Activated T-helper 2 cell treated with anti-CD3 and anti-CD28 coated beads, Interferon-gamma antibody, Interleukin-2, Interleukin-4, amounts not matched to agents 10 μg/mL and 5 μg/mL and 100 μg/mL, durations not matched to agents 14 hours and 24 hours and 36 hours (primary cell): ENCODE measurements at regions of chr9 and their contacts with region 1.

Region 1: GRCh38 chr9:34989003-34989945 is at the start of gene DNAJB5:
- DNase-seq: peak; percentile 98
- H3K4me3 Mint-ChIP-seq: peak within 1 kb of the TSS; percentile 92
- H3K27ac Mint-ChIP-seq: peak within 1 kb of the TSS; percentile 87
- H3K4me1 Mint-ChIP-seq: peaks cover 62% of the 10 kb centered on the region
- H3K27me3 Mint-ChIP-seq: no peaks in the 10 kb centered on the region
- total RNA-seq, gene DNAJB5: 7.5 and 11.3 TPM in 2 replicates

Region 2: DNA sequence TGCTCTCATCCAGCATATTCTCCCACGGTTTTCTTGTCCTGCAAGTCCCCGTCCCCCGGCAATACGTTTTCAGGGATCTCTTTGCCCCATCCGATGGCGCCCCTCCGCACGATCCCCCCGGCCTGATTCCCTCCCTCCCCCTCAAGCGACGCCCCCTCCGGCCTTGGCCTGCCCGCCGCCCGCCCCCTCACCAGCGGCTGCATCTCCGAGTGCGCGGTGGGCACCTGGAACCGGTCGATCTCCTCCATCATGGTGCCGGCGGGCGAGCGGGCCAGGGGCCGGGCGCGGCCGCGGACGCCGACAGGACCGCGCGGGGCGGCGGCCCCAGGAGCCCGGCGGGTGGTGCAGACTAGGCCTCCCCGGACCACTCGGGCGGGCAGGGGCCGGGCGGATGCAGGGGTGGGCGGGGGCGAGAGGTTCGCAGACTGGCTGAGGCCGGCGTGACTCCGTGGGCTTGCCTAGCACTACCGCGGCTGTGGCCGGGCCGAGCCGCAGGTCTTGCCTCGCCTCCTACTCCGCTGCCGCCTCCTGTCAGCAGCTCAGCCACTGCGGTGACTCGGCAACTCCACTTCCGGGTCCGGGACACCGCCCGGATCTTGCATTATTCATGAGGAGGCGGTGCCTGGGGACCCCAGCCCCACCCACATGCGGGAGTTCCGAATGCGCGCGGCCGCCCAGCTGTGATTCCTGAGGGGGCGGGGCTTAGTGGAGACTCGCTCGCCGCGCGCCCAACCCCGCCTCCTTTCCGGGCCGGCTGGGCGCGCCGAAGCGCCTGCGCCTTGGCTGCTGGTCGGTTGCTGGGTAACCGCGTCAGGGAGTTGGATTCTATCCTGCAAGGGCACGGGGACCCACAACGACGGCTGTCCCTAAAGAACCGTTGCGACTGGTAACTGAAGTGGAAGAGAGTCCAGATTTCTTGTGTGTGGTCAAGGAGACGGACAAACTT is 531.0 kb before region 1 on chr9 and contains the starts of genes DNAI1 and FAM219A:
- intact Hi-C with region 1: loop called (anchors 5 kb)
- DNase-seq: peak; percentile 99
- H3K4me3 Mint-ChIP-seq: peak within 1 kb of the TSS; percentile 88
- H3K27ac Mint-ChIP-seq: peak within 1 kb of the TSS; percentile 60
- H3K4me1 Mint-ChIP-seq: peaks cover 43% of the 10 kb centered on the region
- H3K27me3 Mint-ChIP-seq: peaks cover 17% of the 10 kb centered on the region
- total RNA-seq, gene DNAI1: not detected in 2 replicates
- total RNA-seq, gene FAM219A: 17.3 and 19.7 TPM in 2 replicates

Region 3: GRCh38 chr9:34899535-34900158 is 89.6 kb before region 1 on chr9:
- intact Hi-C with region 1: loop called (anchors 1 kb)
- DNase-seq: peak; percentile 63
- H3K4me3 Mint-ChIP-seq: no peak overlapping the region
- H3K27ac Mint-ChIP-seq: no peak overlapping the region
- H3K4me1 Mint-ChIP-seq: no peaks in the 10 kb centered on the region
- H3K27me3 Mint-ChIP-seq: peaks cover 37% of the 10 kb centered on the region

Region 4: DNA sequence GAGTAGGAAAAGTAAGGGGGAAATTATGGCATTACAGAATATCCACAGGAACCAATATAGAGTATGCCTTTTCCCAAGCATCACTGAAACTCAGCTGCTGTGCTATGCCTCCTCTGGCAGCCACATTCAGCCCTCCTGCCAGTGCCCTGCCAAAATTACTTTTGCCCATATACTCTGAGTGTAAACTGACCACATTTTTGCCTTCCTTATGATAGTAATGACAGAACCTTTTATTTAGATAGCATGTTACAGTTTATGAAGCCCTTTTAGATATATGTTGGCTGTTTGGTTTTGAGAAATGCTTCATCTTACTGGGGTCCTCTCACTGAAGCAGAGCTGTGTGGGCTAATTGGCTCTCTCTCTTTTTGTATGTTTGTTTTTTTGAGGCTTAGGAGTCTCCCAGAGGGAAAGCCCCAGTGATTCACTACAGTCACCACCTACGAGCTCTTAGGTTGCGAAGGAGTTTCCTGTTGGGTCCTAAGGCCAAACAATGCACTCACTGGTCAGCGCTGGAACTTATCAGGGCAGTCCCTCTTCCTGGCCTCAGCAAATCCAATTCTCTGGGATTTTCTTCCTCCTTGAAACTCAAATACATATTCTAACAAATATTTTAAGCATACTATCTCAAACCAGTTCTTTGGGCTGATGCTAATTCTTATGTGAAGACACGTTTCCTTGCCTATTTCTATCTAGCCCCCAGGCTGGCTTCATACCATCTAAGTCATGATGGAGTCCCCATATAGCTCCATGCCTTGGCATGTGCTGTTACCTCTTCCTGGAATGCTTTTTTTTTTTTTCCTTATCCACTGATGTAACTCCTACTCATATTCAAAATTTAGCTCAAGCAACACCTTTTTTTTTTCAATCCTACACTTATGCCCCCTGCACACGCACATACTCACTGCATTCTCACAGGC is 27.4 kb before region 1 on chr9:
- intact Hi-C with region 1: loop called (anchors 2 kb)
- DNase-seq: no peak
- H3K4me3 Mint-ChIP-seq: no peak overlapping the region
- H3K27ac Mint-ChIP-seq: no peak overlapping the region
- H3K4me1 Mint-ChIP-seq: peaks cover 24% of the 10 kb centered on the region
- H3K27me3 Mint-ChIP-seq: peaks cover 56% of the 10 kb centered on the region

Region 5: DNA sequence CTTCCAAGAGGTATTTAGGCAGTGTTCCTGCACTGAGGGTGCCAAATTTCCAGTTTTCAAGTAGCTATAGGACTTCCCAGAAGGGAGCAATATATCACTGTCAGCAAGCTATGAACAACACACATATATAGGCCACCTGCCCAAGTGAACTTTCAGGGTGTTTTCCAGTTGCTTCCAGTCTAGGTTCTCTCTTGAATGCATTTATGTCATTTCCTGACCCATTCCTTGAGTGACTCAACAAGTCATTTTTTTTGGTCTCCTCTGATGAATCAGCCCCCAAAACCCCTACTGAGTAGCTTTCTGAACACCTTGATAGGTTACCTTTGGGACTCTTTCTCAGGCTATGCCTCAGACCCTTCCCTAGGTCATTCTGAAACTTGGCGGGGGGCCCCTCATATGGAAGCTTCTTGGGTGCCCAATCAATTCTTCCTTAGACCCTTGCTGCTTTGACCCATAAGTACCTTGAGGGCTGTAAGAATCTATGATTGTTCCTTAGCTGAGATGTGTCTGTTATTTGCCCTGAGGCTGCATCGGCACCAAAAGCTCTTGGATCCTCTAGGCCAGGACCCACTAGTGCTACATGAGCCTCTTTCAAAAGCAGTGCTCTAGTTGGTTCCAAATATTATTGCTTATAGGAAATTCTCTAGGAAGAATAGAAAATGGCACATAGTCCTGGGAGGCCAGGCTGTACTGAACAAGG is 12.7 kb after region 1 on chr9:
- intact Hi-C with region 1: loop called (anchors 2 kb)
- DNase-seq: no peak
- H3K4me3 Mint-ChIP-seq: no peak overlapping the region
- H3K27ac Mint-ChIP-seq: peak overlapping the region; percentile 58
- H3K4me1 Mint-ChIP-seq: peaks cover 34% of the 10 kb centered on the region
- H3K27me3 Mint-ChIP-seq: no peaks in the 10 kb centered on the region

Region 6: DNA sequence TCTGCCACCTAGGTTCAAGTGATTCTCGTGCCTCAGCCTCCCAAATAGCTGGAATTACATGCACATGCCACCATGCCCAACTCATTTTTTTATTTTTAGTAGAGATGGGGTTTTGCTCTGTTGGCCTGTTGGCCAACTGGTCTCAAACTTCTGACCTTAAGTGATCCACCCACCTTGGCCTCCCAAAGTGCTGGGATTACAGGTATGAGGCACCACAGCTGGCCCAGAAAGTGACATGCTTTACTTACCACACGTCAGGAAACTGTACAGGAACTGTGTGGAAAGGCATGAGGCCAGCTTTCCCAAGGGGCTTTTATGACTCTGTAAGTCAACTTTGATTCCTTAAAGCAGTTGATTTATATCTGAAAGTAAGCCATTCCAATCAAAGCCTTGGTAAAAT is 25.2 kb after region 1 on chr9:
- intact Hi-C with region 1: no loop called
- DNase-seq: no peak
- H3K4me3 Mint-ChIP-seq: no peak overlapping the region
- H3K27ac Mint-ChIP-seq: no peak overlapping the region
- H3K4me1 Mint-ChIP-seq: peaks cover 2% of the 10 kb centered on the region
- H3K27me3 Mint-ChIP-seq: no peaks in the 10 kb centered on the region

Region 7: GRCh38 chr9:35071814-35072460 is 82.7 kb after region 1 on chr9:
- intact Hi-C with region 1: loop called (anchors 2 kb)
- DNase-seq: peak; percentile 72
- H3K4me3 Mint-ChIP-seq: peak overlapping the region; percentile 91
- H3K27ac Mint-ChIP-seq: peak overlapping the region; percentile 88
- H3K4me1 Mint-ChIP-seq: peaks cover 43% of the 10 kb centered on the region
- H3K27me3 Mint-ChIP-seq: no peaks in the 10 kb centered on the region

Region 8: DNA sequence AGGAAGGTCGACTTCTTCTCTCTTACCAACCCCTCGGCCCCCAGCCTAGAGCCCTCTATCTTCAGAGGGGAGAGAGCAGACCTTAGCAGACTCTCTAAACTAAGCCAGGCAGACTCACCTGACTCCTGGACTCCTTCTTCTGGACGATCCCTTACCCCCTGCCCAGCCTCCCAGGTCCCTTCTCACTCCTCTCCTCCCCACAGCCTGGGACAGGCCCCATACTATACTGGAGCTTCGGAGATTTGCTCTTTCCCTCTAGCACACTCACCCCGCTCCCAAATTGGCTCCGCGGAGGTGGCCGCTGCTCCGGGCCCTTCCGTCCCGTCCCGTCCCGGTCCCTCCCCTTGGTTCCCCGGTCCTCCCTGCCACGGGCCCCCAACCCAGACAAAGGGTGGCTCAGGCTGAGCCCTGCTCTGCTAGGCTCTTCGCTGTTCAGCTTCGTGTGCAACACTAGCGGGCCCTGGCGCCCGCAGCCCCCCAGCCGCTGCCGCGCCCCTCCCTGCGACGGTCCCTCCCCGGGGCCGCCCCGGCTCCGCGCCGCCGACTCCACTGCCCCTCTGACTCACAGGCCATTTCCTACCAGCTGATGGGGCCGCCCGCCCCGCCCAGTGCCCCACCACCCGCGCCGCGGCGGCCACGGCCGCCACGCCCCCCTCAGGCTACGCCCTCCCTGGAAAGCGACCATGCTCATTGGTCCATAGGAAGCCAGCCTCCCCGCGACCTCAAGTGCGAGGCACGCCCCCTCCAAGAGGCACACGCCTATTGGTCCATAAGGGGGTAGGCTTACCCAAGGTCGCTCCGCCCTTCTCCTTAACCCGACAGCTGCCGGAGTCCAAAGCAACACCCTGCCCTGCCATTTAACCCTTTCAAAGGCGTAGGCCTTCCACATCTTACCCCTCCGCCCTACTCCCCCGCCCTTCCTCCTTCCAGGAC is 122.0 kb after region 1 on chr9:
- intact Hi-C with region 1: loop called (anchors 5 kb)
- DNase-seq: peak; percentile 93
- H3K4me3 Mint-ChIP-seq: peak overlapping the region; percentile 71
- H3K27ac Mint-ChIP-seq: peak overlapping the region; percentile 81
- H3K4me1 Mint-ChIP-seq: peaks cover 35% of the 10 kb centered on the region
- H3K27me3 Mint-ChIP-seq: no peaks in the 10 kb centered on the region

Region 9: GRCh38 chr9:35322075-35322885 is 333.0 kb after region 1 on chr9:
- intact Hi-C with region 1: no loop called
- DNase-seq: no peak
- H3K4me3 Mint-ChIP-seq: no peak overlapping the region
- H3K27ac Mint-ChIP-seq: no peak overlapping the region
- H3K4me1 Mint-ChIP-seq: no peaks in the 10 kb centered on the region
- H3K27me3 Mint-ChIP-seq: no peaks in the 10 kb centered on the region